ENCODE measurements at regions of chr1 and their contacts with region 1.

Region 1: GRCh38 chr1:165367375-165367993 is 11.0 kb upstream of the LMX1A start:
- DNase-seq: peak; percentile 69
- H3K4me3 ChIP-seq: no peak overlapping the region
- H3K27ac ChIP-seq: no peak overlapping the region
- H3K4me1 ChIP-seq: no peaks in the 10 kb centered on the region
- H3K27me3 ChIP-seq: peaks cover 5 to 14% of the 10 kb centered on the region in 2 experiments
- CTCF ChIP-seq: peak; percentile 88 to 96
- POLR2A ChIP-seq: no peak

Region 2: GRCh38 chr1:165129568-165130164 is 237.8 kb before region 1 on chr1:
- CTCF ChIA-PET with region 1: interaction called, 3 read pairs
- POLR2A ChIA-PET with region 1: no interaction called
- dilution Hi-C with region 1: no loop called
- intact Hi-C with region 1: loop called (anchors 5 kb)
- DNase-seq: peak; percentile 40
- H3K4me3 ChIP-seq: no peak overlapping the region
- H3K27ac ChIP-seq: no peak overlapping the region
- H3K4me1 ChIP-seq: no peaks in the 10 kb centered on the region
- H3K27me3 ChIP-seq: no peaks in the 10 kb centered on the region
- CTCF ChIP-seq: peak; percentile 39 to 48
- POLR2A ChIP-seq: no peak

Region 3: DNA sequence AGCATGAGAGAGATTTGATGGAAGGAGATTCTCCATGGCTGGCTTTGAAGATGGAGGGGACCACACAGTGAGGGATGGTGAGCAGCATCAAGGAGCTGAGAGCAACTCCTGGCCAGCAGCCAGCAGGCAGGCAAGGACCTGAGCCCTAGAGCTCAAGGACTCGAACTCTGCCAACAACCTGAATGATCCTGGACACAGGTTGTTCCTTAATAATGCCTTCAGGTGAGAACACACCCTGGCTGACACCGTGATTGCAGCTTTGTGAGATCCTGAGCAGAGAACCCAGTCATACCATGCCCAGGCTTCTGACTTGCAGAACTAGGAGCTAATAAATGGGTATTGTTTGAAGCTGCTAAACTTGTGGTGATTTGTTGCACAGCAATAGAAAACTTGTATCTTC is 194.1 kb before region 1 on chr1:
- CTCF ChIA-PET with region 1: no interaction called
- POLR2A ChIA-PET with region 1: no interaction called
- dilution Hi-C with region 1: no loop called
- intact Hi-C with region 1: no loop called
- DNase-seq: no peak
- H3K4me3 ChIP-seq: no peak overlapping the region
- H3K27ac ChIP-seq: no peak overlapping the region
- H3K4me1 ChIP-seq: no peaks in the 10 kb centered on the region
- H3K27me3 ChIP-seq: no peaks in the 10 kb centered on the region
- CTCF ChIP-seq: no peak
- POLR2A ChIP-seq: no peak

Region 4: DNA sequence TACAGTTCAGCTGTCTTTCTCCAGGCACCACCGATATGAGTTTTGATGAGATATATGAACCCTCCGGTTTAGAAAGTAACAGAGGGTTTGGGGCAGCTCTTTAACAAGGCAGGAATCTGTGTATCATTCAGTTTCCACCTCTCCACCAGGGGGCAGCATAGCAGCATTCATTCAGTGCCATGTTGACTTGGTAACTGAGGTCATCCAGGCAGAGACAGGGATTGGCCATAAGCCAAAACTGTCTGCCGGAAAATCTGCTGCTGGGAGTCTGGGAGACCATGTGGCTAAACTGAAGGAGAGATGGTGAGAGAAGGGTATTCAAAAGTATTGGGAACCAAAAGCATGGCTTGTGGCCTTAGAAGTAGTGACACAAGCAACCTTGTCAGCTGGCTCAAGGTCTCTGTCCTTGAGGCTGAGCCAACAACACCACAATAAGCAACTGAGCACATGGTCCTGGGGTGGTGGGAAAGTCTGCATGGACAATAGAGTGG is 109.5 kb before region 1 on chr1:
- CTCF ChIA-PET with region 1: interaction called, 14 read pairs
- POLR2A ChIA-PET with region 1: no interaction called
- dilution Hi-C with region 1: no loop called
- intact Hi-C with region 1: loop called (anchors 1 kb)
- DNase-seq: peak; percentile 56
- H3K4me3 ChIP-seq: no peak overlapping the region
- H3K27ac ChIP-seq: no peak overlapping the region
- H3K4me1 ChIP-seq: no peaks in the 10 kb centered on the region
- H3K27me3 ChIP-seq: no peaks in the 10 kb centered on the region
- CTCF ChIP-seq: peak; percentile 69 to 71
- POLR2A ChIP-seq: no peak

Region 5: DNA sequence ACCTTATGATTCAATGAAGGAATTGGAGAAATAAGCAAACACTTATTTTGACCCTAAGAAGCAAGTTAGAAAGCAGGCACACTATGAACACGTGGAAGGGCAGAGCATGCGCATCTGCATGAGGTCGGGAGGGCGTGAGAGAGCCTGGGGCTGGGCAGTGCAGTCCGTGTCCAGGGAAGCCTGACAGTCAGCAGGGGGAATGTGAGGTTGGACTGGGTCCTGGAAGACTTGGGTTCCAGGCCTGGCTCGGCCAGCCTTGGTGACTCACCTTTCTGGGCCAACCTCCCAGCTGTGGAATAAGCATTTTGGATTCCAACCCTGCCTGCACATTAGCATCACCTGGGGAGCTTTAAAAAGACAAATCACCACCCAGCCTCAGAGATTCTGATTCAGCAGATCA is 15.6 kb after region 1 on chr1:
- CTCF ChIA-PET with region 1: interaction called, 21 read pairs
- POLR2A ChIA-PET with region 1: no interaction called
- dilution Hi-C with region 1: no loop called
- intact Hi-C with region 1: no loop called
- DNase-seq: no peak
- H3K4me3 ChIP-seq: no peak overlapping the region
- H3K27ac ChIP-seq: no peak overlapping the region
- H3K4me1 ChIP-seq: no peaks in the 10 kb centered on the region
- H3K27me3 ChIP-seq: peaks cover 13 to 16% of the 10 kb centered on the region in 2 experiments
- CTCF ChIP-seq: no peak
- POLR2A ChIP-seq: no peak

Region 6: DNA sequence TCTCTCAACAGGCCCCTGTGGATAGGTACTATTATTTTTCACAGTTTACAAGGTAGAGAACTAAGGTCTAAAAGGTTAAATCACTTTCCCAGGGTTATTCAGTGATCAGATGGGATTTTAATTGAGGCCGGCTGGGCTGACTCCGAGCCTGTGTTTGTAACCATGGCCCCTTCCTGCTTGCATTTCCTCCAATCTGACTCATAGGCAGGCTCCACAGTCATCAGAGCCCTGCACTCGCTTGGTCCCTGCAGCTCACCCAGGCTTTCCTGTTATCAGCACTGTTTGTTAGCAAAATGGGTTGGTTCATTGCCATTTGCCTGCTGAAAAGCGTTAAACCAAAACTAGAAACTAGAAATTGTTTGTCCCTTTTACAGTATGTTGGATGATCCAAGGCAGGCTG is 30.5 kb after region 1 on chr1:
- CTCF ChIA-PET with region 1: interaction called, 29 read pairs
- POLR2A ChIA-PET with region 1: no interaction called
- dilution Hi-C with region 1: no loop called
- intact Hi-C with region 1: no loop called
- DNase-seq: peak; percentile 87
- H3K4me3 ChIP-seq: no peak overlapping the region
- H3K27ac ChIP-seq: peak overlapping the region; percentile 59
- H3K4me1 ChIP-seq: peaks cover 13% of the 10 kb centered on the region
- H3K27me3 ChIP-seq: no peaks in the 10 kb centered on the region
- CTCF ChIP-seq: no peak
- POLR2A ChIP-seq: no peak